ENCODE measurements at regions of chr3 and their contacts with region 1.

Region 1: DNA sequence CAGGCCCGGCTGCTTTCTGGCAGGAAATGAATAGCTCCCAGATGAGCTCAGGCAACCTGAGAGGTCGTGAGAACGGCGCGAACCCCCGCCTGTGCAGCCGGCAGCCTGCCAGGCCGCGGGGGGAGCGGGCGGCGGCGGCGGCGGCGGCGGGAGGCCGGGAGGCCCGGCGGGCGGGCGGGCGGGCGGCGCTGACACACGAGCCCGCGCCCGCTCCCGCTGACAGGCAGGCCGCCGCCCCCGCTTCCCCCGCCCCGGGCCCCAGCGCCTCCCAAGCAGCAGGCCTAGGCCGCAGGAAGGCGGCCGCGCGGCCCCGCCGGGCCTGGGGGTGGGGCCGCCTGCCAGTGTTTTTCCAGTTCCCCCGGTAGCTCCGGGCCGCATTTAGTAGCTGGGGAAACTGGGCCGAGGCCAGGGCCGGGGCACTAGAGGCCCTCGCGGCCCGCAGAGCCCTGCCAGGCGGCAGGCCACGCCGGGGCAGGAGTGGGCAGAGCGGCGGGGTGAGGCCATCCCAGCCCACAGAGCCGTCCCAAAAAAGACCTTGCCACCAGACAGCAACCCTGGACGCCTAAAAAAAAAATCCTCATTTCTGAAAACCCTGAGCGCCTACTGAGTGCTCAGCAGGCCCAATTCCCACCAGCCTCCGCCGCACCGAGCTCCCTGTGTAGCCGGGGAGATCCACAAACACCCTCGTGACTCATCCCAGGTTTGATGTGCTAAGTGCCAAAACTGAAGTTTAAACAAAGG is 5.6 kb downstream of the HES1 start:
- DNase-seq: no peak
- ATAC-seq: peak; percentile 74
- H3K4me3 ChIP-seq: peak overlapping the region; percentile 44 to 59
- H3K27ac ChIP-seq: peak overlapping the region; percentile 100
- H3K4me1 ChIP-seq: peaks cover 40% of the 10 kb centered on the region
- H3K27me3 ChIP-seq: no peaks in the 10 kb centered on the region
- CTCF ChIP-seq: no peak

Region 2: DNA sequence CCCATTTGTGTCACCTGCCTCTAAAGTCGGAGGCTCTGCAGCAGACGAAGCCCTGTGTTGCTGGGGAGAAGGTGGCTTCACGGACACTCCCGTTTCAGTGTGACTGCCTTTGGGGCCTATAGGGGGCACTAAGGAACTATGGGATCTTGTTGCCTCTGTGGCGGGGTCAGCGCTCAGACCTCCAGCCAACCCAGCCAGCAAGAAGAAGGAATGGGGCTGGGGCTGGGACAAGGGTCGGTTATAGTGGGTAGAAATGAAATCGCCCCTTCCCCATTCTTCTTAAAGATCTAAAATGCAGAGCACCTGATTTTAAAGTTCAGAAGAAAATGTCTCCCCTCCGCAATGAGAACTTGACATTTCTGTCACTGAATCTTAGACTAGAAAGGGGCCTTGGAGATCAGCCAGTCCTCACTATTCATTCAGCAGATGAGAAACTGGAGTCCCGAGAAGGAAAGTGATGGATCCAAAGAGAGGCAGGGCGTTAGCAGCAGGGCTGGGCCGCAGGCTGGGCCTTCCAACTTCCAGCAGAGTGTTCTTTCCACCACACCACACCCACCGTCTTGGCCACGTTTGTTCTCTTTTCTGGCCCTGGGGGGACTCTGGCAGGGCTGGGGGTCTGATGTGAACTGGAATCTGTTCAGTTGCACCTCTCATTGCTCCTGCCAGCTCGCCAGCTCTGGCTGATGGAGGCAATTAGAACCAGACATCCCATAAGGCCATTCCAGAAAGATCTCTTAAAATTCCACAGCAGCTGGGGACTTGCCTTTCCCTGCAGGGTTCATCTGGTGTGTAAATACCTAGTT is 353.2 kb before region 1 on chr3:
- CTCF ChIA-PET with region 1: interaction called, 3 read pairs
- POLR2A ChIA-PET with region 1: interaction called, 13 read pairs
- in situ Hi-C with region 1: no loop called
- intact Hi-C with region 1: no loop called
- DNase-seq: no peak
- ATAC-seq: peak; percentile 95
- H3K4me3 ChIP-seq: no peak overlapping the region
- H3K27ac ChIP-seq: peak overlapping the region; percentile 20; the same call in 1 of the 2 replicates
- H3K4me1 ChIP-seq: peaks cover 9% of the 10 kb centered on the region; the same call in 1 of the 2 replicates
- H3K27me3 ChIP-seq: no peaks in the 10 kb centered on the region
- CTCF ChIP-seq: peak; percentile 95

Region 3: GRCh38 chr3:193869221-193870201 is 272.1 kb before region 1 on chr3:
- CTCF ChIA-PET with region 1: no interaction called
- POLR2A ChIA-PET with region 1: no interaction called
- in situ Hi-C with region 1: no loop called
- intact Hi-C with region 1: no loop called
- DNase-seq: no peak
- ATAC-seq: peak; percentile 83
- H3K4me3 ChIP-seq: peak overlapping the region in 1 of 2 experiments; percentile 14; a peak in 1 of 4 replicates
- H3K27ac ChIP-seq: peak overlapping the region; percentile 67
- H3K4me1 ChIP-seq: peaks cover 37% of the 10 kb centered on the region
- H3K27me3 ChIP-seq: no peaks in the 10 kb centered on the region
- CTCF ChIP-seq: no peak

Region 4: DNA sequence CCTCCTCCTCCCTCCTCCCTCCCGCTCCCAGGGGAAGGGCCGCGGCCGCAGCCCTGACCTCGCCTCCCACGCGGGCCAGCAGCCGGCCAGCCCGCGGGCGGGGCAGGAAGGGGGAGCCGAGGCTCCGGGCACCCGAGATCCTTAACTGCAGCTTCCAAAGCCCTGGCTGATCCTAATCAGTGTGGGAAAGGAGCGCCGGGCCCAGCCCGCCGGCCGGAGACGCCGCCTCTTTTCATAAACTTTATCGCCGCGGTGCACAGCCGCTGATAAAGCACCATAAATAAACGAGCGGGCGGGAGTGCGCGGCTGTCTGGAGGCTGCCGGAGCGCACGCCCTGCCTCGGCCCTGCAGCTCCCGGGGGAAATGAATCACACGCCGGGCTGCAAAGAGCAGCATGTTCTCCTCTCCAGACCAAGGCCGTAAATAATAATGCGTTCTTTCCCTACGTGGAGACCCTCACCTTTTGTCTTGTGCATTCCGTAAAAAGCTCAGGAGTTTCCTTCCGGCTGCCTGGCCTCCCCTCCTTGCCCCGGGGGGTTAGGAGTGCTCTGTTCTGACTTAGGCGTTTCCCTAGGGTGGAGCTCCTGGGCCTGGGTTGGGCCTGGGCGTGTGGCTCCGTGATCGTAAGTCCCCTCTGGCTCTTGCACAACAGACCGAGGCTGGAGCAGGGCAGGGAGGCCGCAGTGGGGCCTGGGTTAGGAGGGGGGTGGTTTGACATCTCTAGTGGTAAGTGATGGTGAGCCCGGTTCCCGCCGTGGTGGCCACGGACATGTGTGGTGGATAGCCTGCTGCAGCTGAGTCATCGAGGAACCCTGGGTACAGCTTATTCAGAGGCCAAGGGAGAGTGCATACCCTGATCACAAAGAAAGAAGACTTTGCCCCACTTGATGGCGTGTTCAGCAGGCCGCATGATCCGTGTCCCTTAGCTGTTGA is 138.2 kb before region 1 on chr3:
- CTCF ChIA-PET with region 1: no interaction called
- POLR2A ChIA-PET with region 1: no interaction called
- in situ Hi-C with region 1: no loop called
- intact Hi-C with region 1: no loop called
- DNase-seq: peak; percentile 71
- ATAC-seq: peak; percentile 92
- H3K4me3 ChIP-seq: peak overlapping the region; percentile 47 to 62
- H3K27ac ChIP-seq: peak overlapping the region; percentile 72
- H3K4me1 ChIP-seq: peaks cover 34% of the 10 kb centered on the region
- H3K27me3 ChIP-seq: no peaks in the 10 kb centered on the region
- CTCF ChIP-seq: no peak

Region 5: DNA sequence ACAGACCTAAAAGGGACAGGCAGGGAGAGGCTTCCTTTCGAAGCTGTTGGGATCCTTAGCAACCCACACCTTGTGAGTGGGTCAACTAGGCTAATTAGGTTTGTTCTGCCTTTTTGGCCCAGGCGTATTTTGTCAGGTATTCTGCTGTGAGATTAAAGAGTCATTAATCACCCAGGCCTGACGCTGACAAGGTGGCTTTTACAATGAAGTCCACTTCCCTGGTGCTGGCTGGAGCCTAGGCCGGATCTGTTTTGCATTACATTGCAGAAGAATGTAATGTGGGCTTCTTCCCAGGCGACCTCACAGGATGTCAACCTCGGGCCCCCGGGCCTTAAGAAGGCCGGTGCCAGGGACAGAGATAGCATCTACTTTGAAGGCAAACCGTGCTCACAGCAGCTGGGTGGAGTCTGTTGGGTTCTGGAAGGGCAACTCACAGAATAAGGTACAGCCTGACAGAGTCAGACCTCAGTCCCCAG is 71.3 kb after region 1 on chr3:
- CTCF ChIA-PET with region 1: no interaction called
- POLR2A ChIA-PET with region 1: interaction called, 10 read pairs
- in situ Hi-C with region 1: no loop called
- intact Hi-C with region 1: no loop called
- DNase-seq: no peak
- ATAC-seq: no peak
- H3K4me3 ChIP-seq: no peak overlapping the region
- H3K27ac ChIP-seq: no peak overlapping the region
- H3K4me1 ChIP-seq: no peaks in the 10 kb centered on the region
- H3K27me3 ChIP-seq: no peaks in the 10 kb centered on the region
- CTCF ChIP-seq: no peak

Region 6: GRCh38 chr3:194270627-194271459 is 129.3 kb after region 1 on chr3:
- CTCF ChIA-PET with region 1: no interaction called
- POLR2A ChIA-PET with region 1: interaction called, 21 read pairs
- in situ Hi-C with region 1: no loop called
- intact Hi-C with region 1: no loop called
- DNase-seq: no peak
- ATAC-seq: peak; percentile 56
- H3K4me3 ChIP-seq: no peak overlapping the region
- H3K27ac ChIP-seq: peak overlapping the region; percentile 72
- H3K4me1 ChIP-seq: peaks cover 31% of the 10 kb centered on the region
- H3K27me3 ChIP-seq: no peaks in the 10 kb centered on the region
- CTCF ChIP-seq: no peak

Region 7: DNA sequence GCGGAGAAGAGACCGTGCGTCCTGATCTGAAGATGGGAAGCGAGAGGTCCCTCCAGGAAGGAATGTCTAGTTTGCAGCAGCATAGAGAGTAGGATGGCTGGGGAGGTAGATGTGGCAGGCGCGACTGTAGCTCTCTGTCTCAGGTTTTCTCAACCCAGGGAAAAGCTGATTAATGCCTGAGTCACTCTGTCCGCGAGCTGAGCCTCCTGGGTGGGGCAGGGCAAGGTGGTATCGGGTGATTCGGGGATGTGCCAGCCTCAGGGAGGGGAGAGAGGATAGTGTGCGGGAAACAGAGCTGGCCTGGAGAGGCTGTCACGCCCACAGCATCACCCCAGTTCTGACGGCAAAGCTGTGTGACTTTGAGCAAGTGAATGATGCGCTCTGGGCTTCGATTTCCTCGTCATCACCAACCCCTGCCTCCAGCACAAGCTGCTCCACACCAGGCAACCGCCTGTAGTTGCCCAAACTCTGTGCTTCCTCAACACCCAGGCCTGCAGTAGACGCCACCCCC is 181.2 kb after region 1 on chr3:
- CTCF ChIA-PET with region 1: no interaction called
- POLR2A ChIA-PET with region 1: interaction called, 13 read pairs
- in situ Hi-C with region 1: no loop called
- intact Hi-C with region 1: no loop called
- DNase-seq: peak; percentile 93
- ATAC-seq: peak; percentile 79
- H3K4me3 ChIP-seq: peak overlapping the region; percentile 45 to 67
- H3K27ac ChIP-seq: peak overlapping the region; percentile 82
- H3K4me1 ChIP-seq: peaks cover 8% of the 10 kb centered on the region; the same call in 1 of the 2 replicates
- H3K27me3 ChIP-seq: no peaks in the 10 kb centered on the region
- CTCF ChIP-seq: no peak

Region 8: GRCh38 chr3:194333212-194333980 is 191.8 kb after region 1 on chr3:
- CTCF ChIA-PET with region 1: no interaction called
- POLR2A ChIA-PET with region 1: no interaction called
- in situ Hi-C with region 1: no loop called
- intact Hi-C with region 1: no loop called
- DNase-seq: no peak
- ATAC-seq: peak; percentile 97
- H3K4me3 ChIP-seq: peak overlapping the region; percentile 52 to 58
- H3K27ac ChIP-seq: no peak overlapping the region
- H3K4me1 ChIP-seq: no peaks in the 10 kb centered on the region; the same call in 1 of the 2 replicates
- H3K27me3 ChIP-seq: no peaks in the 10 kb centered on the region
- CTCF ChIP-seq: peak; percentile 99

Measured in Panc1 (cell line).